ENCODE measurements at regions of chr1 and their contacts with region 1.

Region 1: GRCh38 chr1:162062542-162063015 is 6.9 kb upstream of the NOS1AP start:
- DNase-seq: peak in 1 of 2 donors; percentile 19
- ATAC-seq: peak in 7 of 8 donors; percentile 42 to 90 (median 75)
- H3K4me3 ChIP-seq: no peak overlapping the region
- H3K27ac ChIP-seq: peak overlapping the region in 5 of 10 donors; percentile 29 to 66 (median 42)
- H3K4me1 ChIP-seq: peaks cover 0 to 22% (median 8%) of the 10 kb centered on the region in 9 donors
- H3K27me3 ChIP-seq: peaks cover 0 to 29% (median 0%) of the 10 kb centered on the region in 7 donors
- CTCF ChIP-seq: no peak

Region 2: DNA sequence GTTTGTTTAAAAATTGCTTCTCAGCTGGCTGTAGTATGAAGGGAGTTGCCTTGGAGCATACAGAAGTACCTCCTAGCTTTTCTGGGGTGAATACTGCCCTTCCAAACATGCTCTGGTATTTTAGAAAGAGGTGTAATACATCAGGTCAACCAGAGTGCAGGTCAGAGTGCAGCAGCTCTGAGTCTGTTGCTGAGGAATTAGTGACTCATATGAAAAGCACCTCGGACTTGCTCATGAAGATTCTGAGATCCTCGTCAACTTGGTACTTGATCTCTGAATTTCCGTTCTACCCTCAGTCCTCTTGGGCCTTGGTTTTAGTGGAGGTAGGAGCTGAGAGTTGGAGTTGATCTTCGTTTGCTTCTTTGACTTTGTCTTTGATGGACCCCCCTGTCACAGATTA is 74.2 kb after region 1 on chr1:
- intact Hi-C with region 1: loop called in 1 of 10 experiments (anchors 5 kb)
- DNase-seq: no peak
- ATAC-seq: peak in 3 of 8 donors; percentile 40 to 52 (median 42)
- H3K4me3 ChIP-seq: no peak overlapping the region
- H3K27ac ChIP-seq: no peak overlapping the region
- H3K4me1 ChIP-seq: peaks cover 0 to 63% (median 25%) of the 10 kb centered on the region in 9 donors
- H3K27me3 ChIP-seq: no peaks in the 10 kb centered on the region
- CTCF ChIP-seq: no peak

Region 3: GRCh38 chr1:162276493-162276892 is 213.9 kb after region 1 on chr1:
- intact Hi-C with region 1: loop called (anchors 2 to 5 kb)
- DNase-seq: no peak
- ATAC-seq: peak in 2 of 8 donors; percentile 38 to 48
- H3K4me3 ChIP-seq: no peak overlapping the region
- H3K27ac ChIP-seq: no peak overlapping the region
- H3K4me1 ChIP-seq: peaks cover 0 to 8% (median 0%) of the 10 kb centered on the region in 9 donors
- H3K27me3 ChIP-seq: peaks cover 0 to 6% (median 0%) of the 10 kb centered on the region in 7 donors
- CTCF ChIP-seq: peak in 7 of 9 donors; percentile 32 to 58 (median 48)